WTC11 (cell line): ENCODE measurements at regions of chr22 and their contacts with region 1.

Region 1: GRCh38 chr22:21593406-21594232 is 26.1 kb downstream of the UBE2L3 start:
- DNase-seq: peak; percentile 51
- ATAC-seq: peak; percentile 91
- H3K4me3 Mint-ChIP-seq: no peak overlapping the region
- H3K27ac Mint-ChIP-seq: peak overlapping the region; percentile 21
- H3K4me1 Mint-ChIP-seq: peaks cover 14% of the 10 kb centered on the region
- H3K27me3 Mint-ChIP-seq: no peaks in the 10 kb centered on the region; the same call in 1 of the 2 replicates
- CTCF ChIP-seq: peak; percentile 40; the same call in 1 of the 2 replicates

Region 2: GRCh38 chr22:21582801-21583740 is 10.5 kb before region 1 on chr22:
- CTCF ChIA-PET with region 1: interaction called, 17 read pairs
- POLR2A ChIA-PET with region 1: no interaction called
- DNase-seq: no peak
- ATAC-seq: no peak
- H3K4me3 Mint-ChIP-seq: no peak overlapping the region
- H3K27ac Mint-ChIP-seq: peak overlapping the region; percentile 45
- H3K4me1 Mint-ChIP-seq: peaks cover 13% of the 10 kb centered on the region
- H3K27me3 Mint-ChIP-seq: no peaks in the 10 kb centered on the region
- CTCF ChIP-seq: no peak

Region 3: DNA sequence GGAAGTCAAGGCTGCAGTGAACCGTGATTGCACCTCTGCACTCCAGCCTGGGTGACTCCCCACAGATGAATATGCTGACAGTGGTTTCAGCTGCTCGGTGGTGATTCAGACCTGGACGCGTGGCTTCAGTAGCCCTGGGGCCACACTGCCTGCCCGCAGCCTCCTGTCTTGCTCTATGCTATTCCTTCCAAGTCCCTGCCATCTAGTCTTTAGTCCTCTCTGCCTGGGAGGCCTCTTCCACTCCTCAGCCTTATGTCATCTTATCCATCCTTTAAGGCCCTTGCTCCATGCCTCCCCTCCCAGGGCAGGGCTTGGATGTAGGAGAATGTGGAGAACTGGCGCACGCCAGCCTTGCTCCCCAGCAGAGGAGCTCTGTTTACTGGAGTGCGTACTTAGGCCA is 13.2 kb after region 1 on chr22:
- CTCF ChIA-PET with region 1: interaction called, 10 read pairs
- POLR2A ChIA-PET with region 1: no interaction called
- DNase-seq: no peak
- ATAC-seq: no peak
- H3K4me3 Mint-ChIP-seq: no peak overlapping the region
- H3K27ac Mint-ChIP-seq: no peak overlapping the region
- H3K4me1 Mint-ChIP-seq: peaks cover 6% of the 10 kb centered on the region; the same call in 1 of the 2 replicates
- H3K27me3 Mint-ChIP-seq: no peaks in the 10 kb centered on the region
- CTCF ChIP-seq: no peak

Region 4: GRCh38 chr22:21622011-21622918 is 28.6 kb after region 1 on chr22:
- CTCF ChIA-PET with region 1: interaction called, 10 read pairs
- POLR2A ChIA-PET with region 1: no interaction called
- DNase-seq: no peak
- ATAC-seq: no peak
- H3K4me3 Mint-ChIP-seq: no peak overlapping the region
- H3K27ac Mint-ChIP-seq: peak overlapping the region; percentile 73
- H3K4me1 Mint-ChIP-seq: peaks cover 21% of the 10 kb centered on the region; the same call in 1 of the 2 replicates
- H3K27me3 Mint-ChIP-seq: no peaks in the 10 kb centered on the region
- CTCF ChIP-seq: no peak

Region 5: DNA sequence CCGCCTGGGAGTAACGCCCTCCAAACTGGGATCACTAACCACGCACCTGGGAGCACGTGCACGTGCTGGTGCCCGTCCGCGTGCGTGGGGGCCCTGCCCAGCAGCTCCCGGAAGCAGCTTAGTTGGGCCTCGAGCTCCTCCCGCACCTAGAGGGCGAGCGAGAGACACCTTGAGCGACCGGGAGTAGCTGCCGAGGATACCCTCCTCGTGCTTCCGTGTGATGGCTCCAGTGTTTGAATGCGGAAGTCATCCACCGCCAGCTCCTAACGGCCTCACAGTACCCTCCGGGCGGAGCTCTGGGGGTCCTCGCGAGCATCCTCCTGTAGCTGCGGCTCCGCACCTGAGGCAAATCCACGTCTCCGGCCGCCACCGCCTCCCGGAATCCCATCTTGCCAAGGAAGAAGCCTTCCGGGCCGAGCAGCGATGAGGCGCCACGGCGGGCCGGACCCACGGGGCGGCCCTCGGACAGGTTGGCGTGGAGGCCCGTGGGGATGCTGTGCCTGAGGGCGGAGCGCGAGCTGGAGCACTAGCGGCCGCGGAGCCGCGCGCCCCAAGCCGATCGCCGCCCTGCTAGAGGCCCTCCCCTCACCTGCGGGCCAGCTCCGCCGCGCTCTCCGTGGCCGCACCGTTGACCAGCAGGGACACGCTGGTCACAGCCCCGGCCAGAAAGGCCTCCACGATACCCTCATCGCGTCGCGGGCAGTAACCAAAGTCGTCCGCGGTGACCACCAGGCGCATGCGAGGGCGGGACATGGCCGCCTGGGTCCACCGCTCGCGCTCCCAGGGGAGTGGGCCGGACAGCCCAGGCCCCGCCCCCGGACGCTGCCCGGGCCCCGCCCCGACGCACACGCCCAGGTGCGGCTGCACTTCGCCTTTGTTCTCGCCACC is 35.9 kb after region 1 on chr22 and contains the start of gene YDJC:
- CTCF ChIA-PET with region 1: interaction called, 32 read pairs
- POLR2A ChIA-PET with region 1: interaction called, 3 read pairs
- DNase-seq: peak; percentile 97
- ATAC-seq: peak; percentile 78
- H3K4me3 Mint-ChIP-seq: peak within 1 kb of the TSS; percentile 80
- H3K27ac Mint-ChIP-seq: 0 out of 2 replicates have a peak within 1 kb of the TSS, but pooled peaks have one; percentile 19
- H3K4me1 Mint-ChIP-seq: peaks cover 19% of the 10 kb centered on the region
- H3K27me3 Mint-ChIP-seq: peaks cover 11% of the 10 kb centered on the region
- CTCF ChIP-seq: no peak; the same call in 1 of the 2 replicates
- total RNA-seq, gene YDJC: 39.1 to 42.1 TPM (median 39.8 TPM) in 3 replicates